GM10248 (cell line): ENCODE measurements at regions of chr4 and their contacts with region 1.

Region 1: DNA sequence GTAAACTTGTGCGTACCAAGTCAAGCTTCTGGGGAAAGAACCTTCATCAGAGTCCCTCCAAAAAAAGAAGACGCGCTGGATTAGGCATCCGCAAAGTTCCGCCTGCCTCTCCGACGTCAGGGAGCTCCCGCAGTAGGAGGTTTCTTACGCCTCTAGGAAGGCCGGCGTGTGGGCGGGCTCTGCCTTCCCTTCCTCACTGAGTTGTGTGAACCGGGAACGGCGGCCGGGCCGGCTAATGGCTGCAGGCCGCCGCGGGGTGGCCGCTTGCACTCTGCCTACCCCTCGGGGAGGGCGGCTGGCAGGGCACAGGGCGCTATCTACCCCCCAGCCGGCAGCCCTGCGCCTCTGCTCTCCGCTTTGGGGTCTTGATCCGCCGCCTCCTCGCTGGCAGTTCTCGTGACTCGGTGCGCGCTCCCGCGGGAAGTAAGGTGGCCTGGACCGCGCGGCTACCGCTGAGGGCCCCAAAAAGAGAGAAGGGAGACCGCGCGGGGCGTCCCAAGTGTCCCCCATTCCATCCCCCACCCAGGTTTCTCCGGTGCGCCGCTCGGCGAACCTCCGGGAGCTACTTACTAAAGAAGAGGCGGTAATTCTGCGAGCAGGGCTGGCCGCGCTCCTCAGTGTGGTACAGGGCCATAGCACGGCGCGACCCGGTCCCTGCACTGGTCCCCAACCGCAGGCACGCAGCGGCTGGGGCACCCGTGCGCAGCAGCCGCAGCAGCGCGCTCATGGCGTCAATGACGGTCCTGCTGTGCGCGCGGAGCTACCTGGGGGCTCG is at the start of gene PPA2:
- DNase-seq: peak; percentile 92
- CTCF ChIP-seq: no peak

Region 2: GRCh38 chr4:105140684-105141490 is 332.6 kb before region 1 on chr4:
- CTCF ChIA-PET with region 1: interaction called, 14 read pairs
- POLR2A ChIA-PET with region 1: no interaction called
- DNase-seq: no peak
- CTCF ChIP-seq: peak; percentile 58

Region 3: DNA sequence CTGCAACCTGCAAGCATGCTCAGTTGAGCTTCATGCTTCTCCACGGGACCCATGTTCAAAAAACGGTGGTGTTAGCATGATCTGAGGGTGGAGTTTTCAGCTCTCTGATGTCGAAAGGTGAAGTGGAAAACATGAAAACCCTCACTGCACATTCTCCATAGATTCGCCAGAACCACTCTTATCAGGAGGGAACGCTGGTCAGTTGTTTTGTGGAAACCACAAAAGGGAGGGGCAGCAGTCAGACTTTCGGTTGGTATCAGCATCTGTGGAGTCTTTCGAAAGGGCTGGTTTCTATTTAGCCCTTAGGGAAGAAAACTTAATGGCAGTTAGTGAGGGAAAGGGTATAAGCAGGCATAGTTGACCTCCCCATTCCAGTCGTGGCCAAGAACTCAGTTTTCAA is 12.3 kb before region 1 on chr4:
- CTCF ChIA-PET with region 1: interaction called, 24 read pairs
- POLR2A ChIA-PET with region 1: interaction called, 3 read pairs
- DNase-seq: no peak
- CTCF ChIP-seq: no peak

Region 4: GRCh38 chr4:105520817-105521790 is 47.6 kb after region 1 on chr4:
- CTCF ChIA-PET with region 1: interaction called, 10 read pairs
- POLR2A ChIA-PET with region 1: no interaction called
- DNase-seq: peak; percentile 62
- CTCF ChIP-seq: peak; percentile 61

Region 5: DNA sequence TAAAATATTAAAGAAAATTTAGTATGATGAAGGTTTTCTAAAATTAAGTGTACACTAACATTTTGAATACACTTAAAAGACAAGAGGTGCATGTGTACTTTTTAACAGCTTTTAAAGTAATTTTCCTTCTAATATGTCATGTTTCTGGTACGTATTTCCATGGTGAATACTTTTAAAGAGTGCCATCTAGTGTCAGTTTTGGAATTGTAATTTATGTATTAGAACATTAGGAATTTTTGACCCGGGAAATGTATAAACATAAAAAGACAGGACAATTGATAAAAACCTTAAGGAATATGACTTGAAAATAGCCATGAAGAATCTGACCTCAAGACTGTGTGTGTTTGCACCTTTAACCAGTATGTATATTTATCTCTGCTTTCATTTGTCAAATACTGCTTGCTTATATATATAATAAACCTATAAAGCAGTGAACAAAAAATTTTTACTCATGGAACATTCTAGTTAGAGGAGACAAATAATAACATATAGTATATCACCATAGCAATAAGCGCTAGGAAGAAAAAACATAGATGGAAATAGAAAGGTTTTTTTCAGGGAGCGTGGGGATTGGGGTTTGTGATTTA is 242.3 kb after region 1 on chr4:
- CTCF ChIA-PET with region 1: interaction called, 21 read pairs
- POLR2A ChIA-PET with region 1: no interaction called
- DNase-seq: no peak
- CTCF ChIP-seq: peak; percentile 41